Cardiac septum (tissue), 1 donor: ENCODE measurements at regions of chr1 and their contacts with region 1.

Region 1: DNA sequence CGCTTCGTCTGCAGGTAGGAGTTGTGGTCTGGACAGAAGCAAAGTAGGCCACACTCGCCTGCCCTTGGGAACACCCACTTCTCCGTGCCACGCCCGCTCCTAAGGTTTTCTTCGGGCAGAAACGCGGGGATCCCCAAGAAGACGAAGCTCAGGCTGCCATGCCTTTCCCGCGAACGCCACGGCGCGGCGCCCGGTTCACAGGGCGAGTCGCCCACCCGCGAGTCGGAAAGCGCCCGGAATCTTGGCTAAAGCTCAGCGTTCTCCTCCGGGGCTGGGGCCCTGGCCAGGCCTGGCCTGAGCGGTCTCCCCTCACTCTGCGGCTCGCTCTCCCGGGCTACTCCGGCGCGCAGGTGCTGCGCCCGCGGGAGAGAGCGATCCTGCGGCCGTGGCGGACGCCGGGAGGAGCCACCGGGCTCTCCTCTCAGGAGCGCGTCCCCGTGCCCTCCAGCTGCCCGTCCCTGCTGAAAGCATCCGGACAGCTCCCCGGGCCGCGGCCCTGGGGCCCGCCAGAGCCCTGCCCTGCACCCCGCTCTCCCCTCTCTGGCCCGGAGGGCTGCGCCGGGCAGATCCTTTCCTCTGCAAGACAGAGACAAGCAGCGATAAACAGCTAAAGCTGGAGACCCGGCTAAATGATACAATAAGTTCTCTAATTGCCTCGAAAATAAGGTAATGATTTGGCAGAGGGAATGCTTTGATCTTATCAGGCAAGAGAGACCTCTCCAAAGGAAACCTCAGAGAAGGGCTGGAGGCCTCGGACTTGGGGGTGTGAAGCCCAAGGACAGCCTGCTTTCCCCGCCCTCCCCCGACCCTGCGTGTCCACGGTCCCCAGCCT is 6.7 kb upstream of the WNT2B start:
- DNase-seq: peak; percentile 84

Region 2: DNA sequence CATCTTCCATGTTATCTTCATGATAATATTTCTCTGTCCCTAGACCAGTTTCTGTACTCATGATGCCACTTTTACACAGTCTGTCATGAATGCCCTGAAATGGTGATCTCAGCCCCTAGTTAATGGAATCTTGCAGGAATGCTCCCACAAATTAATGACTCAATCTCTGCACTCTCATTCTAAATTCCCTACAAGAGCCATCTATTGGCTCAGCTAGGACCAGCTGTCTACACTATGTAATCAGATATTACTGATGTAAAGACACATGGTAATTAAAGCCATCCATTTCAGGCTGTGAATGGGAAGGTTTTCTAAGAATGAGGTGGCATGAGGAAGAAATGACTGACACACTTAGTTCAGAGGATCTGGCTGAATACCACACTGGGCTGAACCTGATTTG is 313.4 kb before region 1 on chr1:
- intact Hi-C with region 1: no loop called
- DNase-seq: no peak

Region 3: DNA sequence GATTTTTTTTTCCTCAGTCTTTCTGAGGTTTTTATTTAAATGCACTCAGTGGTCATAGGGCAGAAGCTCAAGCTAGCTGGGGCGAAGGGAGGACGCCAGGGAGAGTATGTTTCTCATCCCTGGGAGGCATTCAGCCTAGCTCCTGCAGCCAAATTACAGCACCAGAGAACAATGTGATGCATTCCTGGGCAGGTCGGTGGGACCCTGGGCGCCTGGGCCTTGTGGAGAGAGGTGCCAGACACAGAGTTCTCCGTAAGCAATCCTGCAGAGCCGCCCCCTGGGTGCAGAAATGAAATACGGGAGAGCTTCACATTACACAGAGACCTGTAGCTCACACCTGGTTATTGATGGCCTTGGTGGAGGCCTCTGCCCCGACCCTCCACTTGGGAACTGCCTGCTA is 22.2 kb after region 1 on chr1:
- intact Hi-C with region 1: loop called (anchors 2 kb)
- DNase-seq: no peak

Region 4: DNA sequence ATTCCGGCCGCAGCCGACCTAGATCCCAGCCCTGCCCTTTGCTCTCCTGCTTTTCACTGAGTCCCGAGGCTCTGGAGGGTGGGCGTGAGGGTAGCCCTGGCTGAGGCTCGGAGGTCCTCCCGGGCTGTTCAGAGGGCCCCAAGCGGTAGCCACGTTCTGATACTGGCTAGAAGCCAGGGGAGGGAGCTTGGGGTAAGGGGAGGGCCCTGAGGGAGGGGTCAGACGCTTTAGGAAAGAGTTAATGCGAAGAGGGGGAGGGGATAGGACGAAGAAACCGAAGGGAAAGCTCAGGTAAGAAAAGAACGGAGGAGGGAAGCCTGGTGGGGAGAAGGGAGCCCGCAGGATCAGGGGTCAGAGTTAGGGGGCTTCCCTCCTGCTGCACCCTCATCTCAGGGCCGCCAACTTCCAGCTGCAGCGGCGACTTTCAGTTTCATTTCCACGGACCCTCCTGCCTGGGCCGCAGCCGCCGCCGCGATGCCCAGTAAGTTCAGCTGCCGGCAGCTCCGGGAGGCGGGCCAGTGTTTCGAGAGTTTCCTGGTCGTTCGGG is 172.5 kb after region 1 on chr1 and contains the start of gene MOV10:
- intact Hi-C with region 1: loop called (anchors 2 kb)
- DNase-seq: peak; percentile 87
- total RNA-seq, gene MOV10: 18.3 TPM